GM10248 (cell line): ENCODE measurements at regions of chr12 and their contacts with region 1.

Region 1: DNA sequence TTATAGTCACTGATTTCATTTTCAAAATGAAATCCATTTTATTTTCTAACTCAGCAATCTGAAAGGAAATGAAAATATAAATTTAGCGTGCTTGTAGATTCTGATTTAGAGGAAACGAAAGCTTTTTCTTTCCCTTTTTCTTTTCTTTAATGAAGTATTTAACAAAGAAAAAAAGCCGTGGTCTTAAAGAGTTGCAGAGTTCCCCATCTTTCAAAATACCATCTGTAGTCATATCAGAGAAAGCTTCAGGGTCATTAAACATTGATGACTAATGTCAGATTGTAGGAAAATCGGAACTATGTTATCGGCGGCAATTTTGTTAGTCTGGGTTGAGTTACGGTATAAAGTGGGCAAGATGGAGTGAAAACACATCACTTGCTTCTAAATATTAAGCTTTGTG is 32.3 kb downstream of the DRAM1 start:
- DNase-seq: no peak
- CTCF ChIP-seq: no peak

Region 2: DNA sequence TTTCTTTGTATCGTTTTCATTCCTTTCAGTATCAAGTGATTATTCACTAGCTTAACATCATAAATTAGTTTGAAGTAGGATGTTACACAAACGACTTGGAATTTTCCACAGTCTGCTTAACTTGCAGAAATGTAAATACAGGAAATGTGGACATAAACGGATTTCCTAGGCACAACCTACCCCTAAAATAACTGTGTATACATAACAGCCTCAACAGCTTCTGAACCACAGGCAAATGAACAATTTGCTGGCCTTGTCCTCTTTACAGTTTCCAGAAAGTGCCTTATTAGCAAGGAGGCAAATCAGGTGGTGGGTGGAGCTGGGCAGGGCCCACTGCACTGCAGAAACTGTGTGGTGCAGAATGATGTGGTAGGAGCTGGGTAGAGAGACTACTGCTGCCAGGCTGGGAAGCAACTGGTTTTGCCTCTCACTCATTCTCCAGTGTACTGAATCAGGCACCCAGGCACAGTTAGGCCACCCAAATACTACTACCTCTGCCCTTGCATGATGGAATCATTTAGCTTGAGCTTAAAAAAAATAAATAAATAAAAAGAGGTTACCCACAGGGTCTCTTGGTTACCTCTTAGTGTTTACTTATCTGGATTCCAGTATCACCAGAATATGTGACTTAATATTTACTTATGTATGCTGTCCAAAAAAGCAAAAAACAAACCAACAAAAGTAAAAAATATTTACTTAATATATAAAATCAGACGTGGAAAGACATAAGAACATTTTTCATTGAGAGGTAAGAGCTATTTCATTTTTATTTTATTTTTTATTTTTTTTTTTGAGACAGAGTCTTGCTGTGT is 18.0 kb before region 1 on chr12:
- CTCF ChIA-PET with region 1: interaction called, 13 read pairs
- POLR2A ChIA-PET with region 1: interaction called, 4 read pairs
- DNase-seq: peak; percentile 37
- CTCF ChIP-seq: no peak

Region 3: GRCh38 chr12:102182635-102183034 is 273.0 kb after region 1 on chr12:
- CTCF ChIA-PET with region 1: no interaction called
- POLR2A ChIA-PET with region 1: no interaction called
- DNase-seq: no peak
- CTCF ChIP-seq: no peak

Region 4: GRCh38 chr12:102300824-102301461 is 391.3 kb after region 1 on chr12:
- CTCF ChIA-PET with region 1: no interaction called
- POLR2A ChIA-PET with region 1: no interaction called
- DNase-seq: peak; percentile 41
- CTCF ChIP-seq: peak; percentile 21

Region 5: DNA sequence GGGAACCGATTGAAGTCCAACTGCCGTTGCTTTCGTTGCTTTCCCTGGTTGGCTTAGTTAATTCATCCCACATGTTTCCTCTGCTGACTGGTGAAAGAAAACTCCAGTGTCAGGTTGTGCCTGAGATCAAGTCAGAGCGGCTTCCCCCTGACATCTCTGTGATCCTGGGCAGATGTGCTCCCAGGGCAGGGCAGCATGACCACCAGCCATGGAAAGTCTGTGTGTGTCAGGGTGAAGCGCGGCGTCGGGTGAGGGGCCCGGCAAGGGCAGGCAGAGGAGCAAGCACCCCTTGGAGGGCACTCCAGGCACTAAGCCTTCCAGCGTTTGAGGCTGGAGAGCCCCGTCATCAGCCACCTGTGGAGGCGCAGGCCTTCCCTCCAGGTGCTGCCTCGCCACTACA is 625.3 kb after region 1 on chr12:
- CTCF ChIA-PET with region 1: no interaction called
- POLR2A ChIA-PET with region 1: no interaction called
- DNase-seq: no peak
- CTCF ChIP-seq: no peak